GM10248 (cell line): ENCODE measurements at regions of chr18 and their contacts with region 1.

Region 1: GRCh38 chr18:49561289-49562193 is at the start of gene LIPG:
- DNase-seq: peak; percentile 73
- CTCF ChIP-seq: no peak

Region 2: DNA sequence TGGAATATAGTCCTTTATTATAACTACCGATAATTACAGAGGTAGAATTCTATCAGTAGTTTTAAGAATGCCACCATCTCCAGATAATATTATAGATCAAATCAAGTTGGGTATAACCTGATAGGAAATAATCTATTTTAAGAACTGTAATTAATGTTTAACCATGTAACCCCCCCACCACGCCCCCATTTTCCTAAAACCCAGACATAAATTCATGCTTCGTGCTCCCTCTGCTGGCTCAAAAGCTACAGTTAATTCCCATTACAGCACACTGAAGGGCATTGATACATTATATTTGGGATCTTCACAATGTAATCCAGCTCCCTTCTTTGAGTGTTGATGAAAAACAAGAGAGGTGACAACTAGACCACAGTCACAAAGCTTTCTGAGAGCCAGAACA is 382.8 kb before region 1 on chr18:
- CTCF ChIA-PET with region 1: no interaction called
- POLR2A ChIA-PET with region 1: no interaction called
- DNase-seq: no peak
- CTCF ChIP-seq: peak; percentile 62

Region 3: DNA sequence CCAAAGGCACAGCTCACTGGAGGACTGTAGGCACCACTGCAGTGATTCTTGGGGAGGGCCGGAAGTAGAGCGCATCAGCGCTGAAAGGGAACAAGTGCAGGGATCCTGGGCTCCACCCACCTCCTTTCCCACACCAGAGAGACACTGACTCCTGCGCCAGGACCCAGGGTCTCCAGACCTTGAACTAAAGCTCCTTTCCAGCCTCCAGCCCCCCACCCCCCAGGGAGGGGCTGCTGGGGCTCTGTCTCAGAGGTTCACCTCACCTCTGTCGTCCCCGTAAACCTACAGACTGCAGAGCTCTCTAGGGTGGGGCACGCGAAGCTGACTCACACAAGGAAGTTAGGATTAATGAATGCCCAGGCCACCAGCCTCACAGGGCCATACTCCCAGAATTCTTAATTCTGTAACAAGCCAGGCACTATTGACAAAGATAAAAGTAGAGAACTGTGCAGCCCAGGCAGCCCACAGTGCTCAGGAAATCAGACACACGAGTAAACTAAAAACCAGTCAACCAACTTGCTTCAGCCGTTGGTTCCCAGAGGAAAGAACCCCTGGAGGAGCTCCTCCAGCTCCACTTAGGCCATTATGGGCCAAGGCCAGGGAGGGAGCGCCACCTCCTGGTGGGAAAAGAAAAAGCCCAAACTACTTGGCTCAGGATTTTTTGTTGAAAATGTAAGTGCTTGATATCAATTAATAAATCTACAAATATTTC is 296.9 kb after region 1 on chr18:
- CTCF ChIA-PET with region 1: interaction called, 26 read pairs
- POLR2A ChIA-PET with region 1: no interaction called
- DNase-seq: peak; percentile 73
- CTCF ChIP-seq: peak; percentile 80